Activated T-helper 2 cell treated with anti-CD3 and anti-CD28 coated beads, Interferon-gamma antibody, Interleukin-2, Interleukin-4, amounts not matched to agents 10 μg/mL and 5 μg/mL and 100 μg/mL, durations not matched to agents 14 hours and 24 hours and 36 hours (primary cell): ENCODE measurements at regions of chr9 and their contacts with region 1.

Region 1: DNA sequence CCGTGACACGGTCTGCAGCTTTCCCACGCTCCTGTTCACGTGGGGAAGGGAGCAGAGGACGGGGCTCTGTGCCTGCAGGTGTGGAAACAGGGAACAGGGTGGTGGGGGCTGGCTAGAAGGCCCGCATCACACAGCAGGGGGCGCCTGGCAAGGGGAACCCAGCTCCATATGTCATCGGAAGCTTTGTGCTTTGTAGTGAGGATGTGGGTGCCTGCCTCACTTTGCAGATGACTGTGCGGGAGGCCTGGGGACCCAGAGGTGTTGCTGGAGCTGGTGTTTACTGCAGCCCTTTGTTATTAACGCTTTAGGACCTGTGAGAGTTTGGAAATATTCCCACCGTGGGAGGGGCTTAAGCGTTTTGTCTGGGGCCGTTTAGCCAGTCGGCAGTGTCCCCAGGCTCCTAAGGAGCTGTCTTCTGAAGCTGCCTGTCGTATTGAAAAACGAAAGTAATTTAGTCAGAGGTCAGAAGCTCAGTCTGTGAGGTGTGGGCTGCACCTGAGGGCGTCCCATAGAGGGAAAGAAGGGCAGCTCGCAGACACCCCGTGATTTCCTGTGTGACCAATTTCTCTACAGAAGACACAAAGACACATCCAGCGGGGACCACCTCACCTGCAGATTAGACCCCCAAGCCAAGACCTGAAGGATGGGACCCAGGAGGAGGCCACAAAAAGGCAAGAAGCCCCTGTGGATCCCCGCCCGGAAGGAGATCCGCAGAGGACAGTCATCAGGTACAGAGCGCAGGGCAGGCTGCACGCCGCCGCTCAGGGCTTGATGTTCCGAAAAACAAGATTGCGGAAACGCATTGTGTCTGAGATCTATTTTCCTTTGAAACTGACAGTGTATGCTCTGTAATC is 9.1 kb downstream of the MAN1B1 start:
- DNase-seq: peak; percentile 81
- H3K4me3 Mint-ChIP-seq: peak overlapping the region; percentile 63
- H3K27ac Mint-ChIP-seq: peak overlapping the region; percentile 85
- H3K4me1 Mint-ChIP-seq: peaks cover 9% of the 10 kb centered on the region
- H3K27me3 Mint-ChIP-seq: no peaks in the 10 kb centered on the region

Region 2: DNA sequence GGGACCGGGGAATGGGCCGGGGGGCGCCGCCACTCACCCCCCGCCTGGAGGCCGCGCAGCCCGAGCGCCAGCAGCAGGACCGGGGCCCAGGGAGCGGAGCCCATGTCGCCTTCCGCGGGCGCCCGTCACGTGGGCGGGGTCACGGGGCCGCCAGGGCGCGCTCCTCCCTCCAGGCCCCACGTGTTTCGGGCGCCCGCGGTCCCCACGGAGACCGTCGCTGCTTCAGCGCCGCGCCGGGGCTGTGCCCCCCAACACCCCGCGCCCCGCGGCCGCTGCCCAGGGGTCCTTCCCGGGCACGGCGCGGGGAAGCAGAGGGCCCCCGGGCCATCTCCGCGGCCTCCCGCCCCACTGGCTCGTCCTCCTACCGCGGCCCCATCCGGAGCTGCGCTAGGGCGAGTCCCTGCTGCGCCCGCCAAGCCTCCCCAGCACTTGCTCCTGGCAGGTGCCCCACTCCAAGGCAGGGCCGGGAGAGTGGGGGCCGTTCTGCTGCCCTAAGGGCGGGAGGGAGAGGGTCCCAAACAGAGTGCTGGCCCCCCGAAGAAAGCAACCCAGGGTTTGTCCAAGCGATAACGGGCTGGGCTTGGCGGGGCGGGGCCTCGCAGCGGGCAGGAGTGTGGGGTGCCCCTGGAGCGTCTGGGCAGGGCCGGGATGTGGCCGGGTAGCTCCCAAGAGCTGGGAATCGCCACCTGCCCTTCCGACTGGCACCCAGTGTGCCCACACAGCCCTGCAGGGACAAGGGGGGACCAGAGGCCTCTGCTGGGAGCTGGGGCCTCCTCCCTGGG is 18.9 kb after region 1 on chr9 and contains the start of gene DPP7:
- intact Hi-C with region 1: loop called (anchors 2 kb)
- DNase-seq: peak; percentile 78
- H3K4me3 Mint-ChIP-seq: peak within 1 kb of the TSS; percentile 74
- H3K27ac Mint-ChIP-seq: peak within 1 kb of the TSS; percentile 60
- H3K4me1 Mint-ChIP-seq: peaks cover 5% of the 10 kb centered on the region
- H3K27me3 Mint-ChIP-seq: no peaks in the 10 kb centered on the region
- total RNA-seq, gene DPP7: 318 and 321 TPM in 2 replicates

Region 3: GRCh38 chr9:137138722-137139467 is 43.0 kb after region 1 on chr9 and contains the start of gene GRIN1:
- intact Hi-C with region 1: no loop called
- DNase-seq: peak; percentile 44
- H3K4me3 Mint-ChIP-seq: no peak within 1 kb of the TSS
- H3K27ac Mint-ChIP-seq: no peak within 1 kb of the TSS
- H3K4me1 Mint-ChIP-seq: no peaks in the 10 kb centered on the region
- H3K27me3 Mint-ChIP-seq: peaks cover 42% of the 10 kb centered on the region
- total RNA-seq, gene GRIN1: 0.07 TPM in 1 of 2 replicates, not detected in the other

Region 4: DNA sequence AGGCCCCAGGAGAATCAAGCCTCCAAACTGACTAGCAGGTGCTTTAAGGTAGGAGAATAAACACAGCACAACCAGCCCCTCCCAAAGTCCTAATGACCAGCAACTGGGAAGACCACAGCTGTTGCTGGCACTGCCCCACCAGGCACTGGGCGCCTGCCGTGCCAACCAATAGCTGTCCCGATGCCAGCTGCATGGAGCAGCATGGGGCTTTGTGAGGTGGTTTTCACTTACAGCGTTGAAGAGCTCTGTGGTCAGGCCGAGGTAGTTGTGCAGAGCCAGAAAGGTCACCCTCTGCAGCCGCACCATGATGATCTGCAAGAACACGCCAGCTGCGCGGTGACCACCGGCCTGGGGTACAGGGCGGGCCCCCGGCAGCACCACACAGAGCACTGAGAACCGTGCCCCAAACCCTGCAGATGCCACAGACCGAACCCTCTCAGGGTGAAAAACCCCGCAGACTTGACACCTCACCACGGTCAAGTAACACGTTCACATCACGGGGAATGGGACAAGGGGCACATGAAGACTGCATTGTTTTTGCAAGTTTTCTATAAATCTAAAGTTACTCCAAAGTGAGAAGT is 425.6 kb after region 1 on chr9:
- intact Hi-C with region 1: no loop called
- DNase-seq: no peak
- H3K4me3 Mint-ChIP-seq: no peak overlapping the region
- H3K27ac Mint-ChIP-seq: no peak overlapping the region
- H3K4me1 Mint-ChIP-seq: peaks cover 4% of the 10 kb centered on the region
- H3K27me3 Mint-ChIP-seq: no peaks in the 10 kb centered on the region